ENCODE measurements at regions of chr9 and their contacts with region 1.

Region 1: GRCh38 chr9:111362526-111362925 is 32.5 kb upstream of the OR2K2 start:
- DNase-seq: no peak
- ATAC-seq: no peak

Region 2: GRCh38 chr9:111423389-111423788 is 60.9 kb after region 1 on chr9:
- intact Hi-C with region 1: loop called (anchors 5 kb)
- DNase-seq: no peak
- ATAC-seq: no peak

Measured in Right ventricle myocardium inferior (tissue), 1 donor.